CD4-positive, alpha-beta memory T cell (primary cell): ENCODE measurements at regions of chr13 and their contacts with region 1.

Region 1: DNA sequence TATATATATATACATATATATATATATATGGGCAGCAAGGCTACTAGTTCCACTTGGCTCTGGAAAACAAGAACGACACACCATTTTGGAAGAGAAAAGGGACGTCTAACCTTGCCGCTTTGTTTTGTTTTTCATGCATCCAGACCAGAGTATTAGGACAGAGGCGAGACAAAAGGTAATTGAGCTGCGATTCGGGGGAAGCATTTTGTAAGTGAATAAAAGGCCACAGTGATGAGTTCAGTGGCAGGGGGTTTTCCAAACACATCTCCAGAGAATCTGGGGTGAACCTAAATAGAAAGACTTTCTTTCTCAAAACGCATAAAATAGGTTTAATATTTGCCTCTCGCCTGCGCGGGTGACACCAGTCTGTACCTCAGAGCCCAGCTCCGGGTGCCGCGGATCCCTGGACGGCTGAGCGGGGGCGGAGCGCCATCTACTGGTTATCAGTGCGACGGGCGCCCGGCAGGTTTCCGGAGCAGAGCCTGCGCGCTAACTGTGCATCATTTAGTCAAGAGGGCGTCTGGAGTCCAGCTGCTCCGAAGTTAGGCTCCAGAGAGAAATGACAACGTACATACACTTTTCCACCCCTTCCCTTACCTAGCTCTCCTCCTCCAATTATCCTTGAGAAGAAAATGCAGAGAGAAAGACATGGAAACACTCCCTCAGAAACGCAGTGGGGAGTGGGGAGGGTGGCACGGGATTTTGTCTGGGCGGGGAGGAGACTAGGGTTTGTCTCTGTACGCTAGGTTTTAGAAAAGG is 262.3 kb downstream of the TBC1D4 start:
- DNase-seq: peak; percentile 71 to 80 (median 78)
- H3K4me3 ChIP-seq: no peak overlapping the region
- H3K4me3 Mint-ChIP-seq: peak overlapping the region in 7 of 8 donors; percentile 14 to 77 (median 55)
- H3K27ac ChIP-seq: no peak overlapping the region
- H3K27ac Mint-ChIP-seq: peak overlapping the region in 3 of 7 donors; percentile 6 to 79 (median 43)
- H3K4me1 ChIP-seq: peaks cover 7% of the 10 kb centered on the region
- H3K4me1 Mint-ChIP-seq: peaks cover 6 to 7% (median 6%) of the 10 kb centered on the region in 4 donors
- H3K27me3 ChIP-seq: peaks cover 3% of the 10 kb centered on the region
- H3K27me3 Mint-ChIP-seq: peaks cover 21 to 22% of the 10 kb centered on the region in 2 donors

Region 2: DNA sequence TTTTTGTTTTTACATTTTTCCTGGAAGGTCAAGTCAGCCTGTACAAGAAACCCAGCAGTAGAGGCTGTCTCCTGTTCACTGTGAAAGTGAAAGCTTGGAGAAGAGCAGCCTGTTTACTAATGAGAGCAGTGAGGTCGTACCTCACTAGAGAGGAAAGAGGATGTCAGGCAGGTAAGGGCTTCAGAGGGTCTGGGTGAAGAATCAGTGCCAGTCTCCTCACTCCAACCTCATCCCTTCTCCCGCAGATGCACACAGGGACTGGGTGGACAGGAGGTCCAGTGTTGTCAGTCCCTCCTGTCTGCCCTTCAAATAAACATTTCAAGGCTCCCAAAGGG is 1698.4 kb before region 1 on chr13:
- CTCF ChIA-PET with region 1: no interaction called
- POLR2A ChIA-PET with region 1: no interaction called
- intact Hi-C with region 1: loop called (anchors 1 kb)
- DNase-seq: peak in 4 of 5 donors; percentile 20 to 37 (median 29)
- H3K4me3 ChIP-seq: peak overlapping the region; percentile 33 to 35
- H3K4me3 Mint-ChIP-seq: peak overlapping the region; percentile 82 to 93 (median 89)
- H3K27ac ChIP-seq: peak overlapping the region; percentile 23
- H3K27ac Mint-ChIP-seq: peak overlapping the region; percentile 44 to 95 (median 85)
- H3K4me1 ChIP-seq: peaks cover 16% of the 10 kb centered on the region
- H3K4me1 Mint-ChIP-seq: peaks cover 11 to 17% (median 15%) of the 10 kb centered on the region in 4 donors
- H3K27me3 ChIP-seq: no peaks in the 10 kb centered on the region
- H3K27me3 Mint-ChIP-seq: peaks cover 0 to 2% of the 10 kb centered on the region in 2 donors

Region 3: DNA sequence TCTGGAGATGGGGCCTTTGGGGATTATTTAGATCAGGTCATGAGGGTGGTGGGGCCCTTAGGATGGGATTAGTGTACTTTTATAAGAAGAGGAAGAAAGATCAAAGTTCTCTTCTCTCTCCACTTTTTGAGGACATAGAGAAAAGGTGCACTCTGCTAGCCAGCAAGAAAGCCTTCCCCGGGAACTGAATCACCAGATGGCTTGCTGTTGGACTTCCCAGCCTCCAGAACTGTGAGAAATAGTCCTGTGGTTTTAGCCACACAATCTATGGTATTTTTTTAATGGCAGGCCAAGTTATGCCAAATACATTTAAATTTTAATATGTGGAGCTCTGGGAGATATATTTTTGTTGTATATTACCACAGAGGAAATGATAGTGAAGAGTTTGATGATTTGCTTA is 1471.3 kb before region 1 on chr13:
- CTCF ChIA-PET with region 1: interaction called, 10 read pairs
- POLR2A ChIA-PET with region 1: no interaction called
- intact Hi-C with region 1: no loop called
- DNase-seq: no peak
- H3K4me3 ChIP-seq: no peak overlapping the region
- H3K4me3 Mint-ChIP-seq: no peak overlapping the region
- H3K27ac ChIP-seq: no peak overlapping the region
- H3K27ac Mint-ChIP-seq: no peak overlapping the region
- H3K4me1 ChIP-seq: peaks cover 6% of the 10 kb centered on the region
- H3K4me1 Mint-ChIP-seq: peaks cover 26 to 42% (median 39%) of the 10 kb centered on the region in 4 donors
- H3K27me3 ChIP-seq: no peaks in the 10 kb centered on the region
- H3K27me3 Mint-ChIP-seq: no peaks in the 10 kb centered on the region

Region 4: DNA sequence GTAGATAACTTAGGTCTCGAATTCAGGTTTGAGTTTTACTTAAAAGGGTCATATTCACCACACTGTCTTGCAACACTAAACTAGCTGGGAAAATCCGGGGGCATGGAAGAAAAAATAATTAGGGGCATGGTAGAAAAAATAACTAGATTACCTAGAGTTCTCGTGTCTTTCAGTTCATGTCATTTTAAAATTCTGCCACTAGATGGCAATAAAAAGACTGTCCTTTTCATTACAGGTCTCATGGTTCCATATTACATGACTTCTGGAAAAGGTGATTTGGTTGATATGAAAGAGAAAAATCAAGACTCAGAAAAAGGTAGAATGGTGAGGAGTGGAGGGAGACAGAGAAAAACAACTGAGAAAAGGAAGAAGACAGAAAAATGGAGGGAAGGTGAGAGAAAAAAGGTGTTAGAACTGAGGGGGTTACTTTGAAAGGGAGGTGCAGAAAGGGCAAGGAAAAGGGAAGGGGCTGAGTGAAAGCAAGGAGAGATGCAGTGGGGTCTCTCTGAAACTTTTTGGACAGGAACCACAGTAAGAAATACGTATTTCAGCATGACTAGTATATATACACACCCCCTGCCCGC is 1384.4 kb before region 1 on chr13:
- CTCF ChIA-PET with region 1: interaction called, 6 read pairs
- POLR2A ChIA-PET with region 1: no interaction called
- intact Hi-C with region 1: loop called (anchors 1 kb)
- DNase-seq: peak in 4 of 5 donors; percentile 45 to 56 (median 49)
- H3K4me3 ChIP-seq: no peak overlapping the region
- H3K4me3 Mint-ChIP-seq: no peak overlapping the region
- H3K27ac ChIP-seq: no peak overlapping the region
- H3K27ac Mint-ChIP-seq: no peak overlapping the region
- H3K4me1 ChIP-seq: peaks cover 42% of the 10 kb centered on the region
- H3K4me1 Mint-ChIP-seq: peaks cover 34 to 69% (median 47%) of the 10 kb centered on the region in 4 donors
- H3K27me3 ChIP-seq: no peaks in the 10 kb centered on the region
- H3K27me3 Mint-ChIP-seq: no peaks in the 10 kb centered on the region

Region 5: DNA sequence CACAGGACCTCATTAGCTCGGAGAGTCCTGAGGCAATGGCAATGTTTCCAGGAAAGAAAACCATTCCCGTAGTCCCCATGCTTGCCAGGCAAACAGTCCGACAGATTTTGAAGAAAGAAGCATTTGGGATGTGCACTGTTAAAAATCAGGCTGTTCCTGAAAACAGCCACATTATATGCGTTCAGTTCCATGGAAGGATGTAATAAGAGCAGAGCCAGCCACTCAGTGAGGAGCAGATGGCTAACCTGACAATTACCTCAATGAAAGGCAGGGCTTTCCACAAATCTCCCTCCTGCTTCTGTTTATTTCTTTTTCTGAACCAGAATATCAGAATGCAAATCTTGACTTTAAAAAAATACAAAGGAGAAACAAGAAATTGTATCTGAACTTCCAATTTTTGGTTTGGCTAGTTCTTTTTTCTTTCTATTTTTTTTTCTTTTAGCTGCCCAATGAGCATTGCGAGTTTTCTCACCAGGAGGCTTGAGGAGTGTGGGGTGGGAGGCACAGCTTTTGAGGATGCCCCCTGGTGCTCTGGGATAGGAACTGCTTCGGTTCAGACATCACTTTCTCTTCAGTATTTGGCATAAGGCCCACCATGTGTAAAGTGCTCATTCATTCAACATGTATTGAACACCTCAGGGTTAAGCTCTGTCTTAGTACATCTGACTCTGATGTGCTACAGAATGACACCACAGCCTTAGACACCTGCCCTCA is 138.1 kb after region 1 on chr13:
- CTCF ChIA-PET with region 1: interaction called, 4 read pairs
- POLR2A ChIA-PET with region 1: no interaction called
- intact Hi-C with region 1: loop called (anchors 10 kb)
- DNase-seq: peak; percentile 50 to 62 (median 55)
- H3K4me3 ChIP-seq: no peak overlapping the region
- H3K4me3 Mint-ChIP-seq: no peak overlapping the region
- H3K27ac ChIP-seq: no peak overlapping the region
- H3K27ac Mint-ChIP-seq: no peak overlapping the region
- H3K4me1 ChIP-seq: no peaks in the 10 kb centered on the region
- H3K4me1 Mint-ChIP-seq: peaks cover 0 to 3% (median 1%) of the 10 kb centered on the region in 4 donors
- H3K27me3 ChIP-seq: no peaks in the 10 kb centered on the region
- H3K27me3 Mint-ChIP-seq: peaks cover 0 to 4% of the 10 kb centered on the region in 2 donors